HCT116 (cell line): ENCODE measurements at regions of chr4 and their contacts with region 1.

Region 1: DNA sequence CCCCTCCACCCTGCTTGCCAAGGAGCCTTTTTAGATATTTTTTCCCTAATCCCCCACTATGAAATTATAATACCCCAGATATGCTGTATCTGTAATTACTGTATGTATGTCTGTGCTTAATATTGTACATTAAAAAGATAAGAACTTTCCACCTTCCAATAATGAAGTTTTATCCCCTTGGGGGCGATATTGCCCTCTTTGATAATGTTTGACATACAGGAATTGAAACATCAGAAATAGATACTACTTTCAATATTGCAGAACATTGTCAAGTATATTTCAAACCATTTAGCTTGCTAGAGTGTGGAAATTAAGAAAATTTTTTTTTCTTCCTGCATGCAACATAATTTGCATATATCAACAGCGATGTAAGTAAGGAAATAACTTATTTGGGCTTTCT is 58.9 kb downstream of the NAF1 start:
- DNase-seq: peak; percentile 2
- ATAC-seq: peak; percentile 42; the same call in 1 of the 2 replicates
- H3K4me3 ChIP-seq: no peak overlapping the region
- H3K27ac ChIP-seq: no peak overlapping the region
- H3K4me1 ChIP-seq: no peaks in the 10 kb centered on the region
- H3K27me3 ChIP-seq: no peaks in the 10 kb centered on the region
- CTCF ChIP-seq: peak in 2 of 3 experiments; percentile 17 to 52; a peak in 3 of 6 replicates
- POLR2A ChIP-seq: no peak
- RAD21 ChIP-seq: peak; percentile 43; the same call in 1 of the 2 replicates

Region 2: GRCh38 chr4:163166041-163166579 is 58.4 kb after region 1 on chr4:
- CTCF ChIA-PET with region 1: no interaction called
- POLR2A ChIA-PET with region 1: no interaction called
- RAD21 ChIA-PET with region 1: no interaction called
- intact Hi-C with region 1: no loop called
- DNase-seq: no peak
- ATAC-seq: peak; percentile 59
- H3K4me3 ChIP-seq: peak overlapping the region; percentile 79
- H3K27ac ChIP-seq: peak overlapping the region; percentile 47; the same call in 1 of the 2 replicates
- H3K4me1 ChIP-seq: peaks cover 0 to 33% of the 10 kb centered on the region in 2 experiments; a peak in 2 of 4 replicates
- H3K27me3 ChIP-seq: no peaks in the 10 kb centered on the region
- CTCF ChIP-seq: no peak
- POLR2A ChIP-seq: no peak
- RAD21 ChIP-seq: no peak

Region 3: GRCh38 chr4:163332500-163333406 is 225.0 kb after region 1 on chr4 and contains the start of gene NPY1R:
- CTCF ChIA-PET with region 1: no interaction called
- POLR2A ChIA-PET with region 1: no interaction called
- RAD21 ChIA-PET with region 1: no interaction called
- intact Hi-C with region 1: loop called (anchors 5 kb)
- DNase-seq: peak; percentile 34
- ATAC-seq: peak; percentile 90
- H3K4me3 ChIP-seq: peak within 1 kb of the TSS; percentile 17 to 37; a peak in 3 of 4 replicates
- H3K27ac ChIP-seq: no peak within 1 kb of the TSS
- H3K4me1 ChIP-seq: no peaks in the 10 kb centered on the region; a peak in 1 of 4 replicates
- H3K27me3 ChIP-seq: no peaks in the 10 kb centered on the region
- CTCF ChIP-seq: peak; percentile 34 to 62 (median 61); a peak in 5 of 6 replicates
- POLR2A ChIP-seq: no peak
- RAD21 ChIP-seq: peak; percentile 62
- total RNA-seq, gene NPY1R: 0.39 TPM